Right ventricle myocardium superior (tissue), 1 donor: ENCODE measurements at regions of chr20 and their contacts with region 1.

Region 1: GRCh38 chr20:38229376-38230252 is 30.9 kb downstream of the KIAA1755 start:
- DNase-seq: no peak
- ATAC-seq: no peak

Region 2: DNA sequence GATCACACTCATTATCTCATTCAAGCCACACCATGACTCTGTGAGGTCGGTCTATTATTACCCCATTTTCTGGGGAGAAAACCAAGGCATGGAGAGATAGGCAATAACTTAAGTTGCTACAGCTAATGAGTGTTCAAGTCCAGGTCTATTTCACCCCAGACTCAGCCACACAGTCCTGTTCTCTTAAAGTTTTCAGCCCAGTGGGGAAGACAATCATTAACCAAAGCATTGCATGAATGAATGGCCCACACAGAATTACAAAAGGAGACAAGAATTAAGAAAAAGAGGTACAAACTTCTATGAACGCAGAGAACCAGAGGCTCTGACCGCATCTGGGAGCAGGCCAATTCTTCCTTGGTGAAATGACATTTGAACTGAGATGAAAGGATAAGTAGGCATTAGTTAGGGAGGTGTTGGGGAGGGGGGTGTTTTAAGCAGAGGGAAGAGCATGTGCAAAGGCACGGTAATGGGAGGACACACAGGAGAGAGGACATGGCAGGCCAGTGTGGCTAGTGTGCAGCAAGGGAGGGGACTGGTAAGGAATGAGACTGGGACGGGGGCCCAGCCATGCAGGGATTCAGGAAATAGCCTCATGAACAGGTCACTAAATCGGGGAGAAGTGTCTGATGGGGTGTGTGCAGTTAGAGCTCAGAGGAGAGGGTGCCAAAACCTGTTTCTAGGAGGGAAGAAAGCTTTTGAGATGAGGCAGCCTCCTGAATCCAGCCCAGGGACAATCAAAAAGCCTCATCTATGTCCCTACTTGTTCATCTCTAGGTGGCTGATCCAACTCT is 81.7 kb after region 1 on chr20:
- intact Hi-C with region 1: loop called (anchors 5 kb)
- DNase-seq: no peak
- ATAC-seq: no peak

Region 3: DNA sequence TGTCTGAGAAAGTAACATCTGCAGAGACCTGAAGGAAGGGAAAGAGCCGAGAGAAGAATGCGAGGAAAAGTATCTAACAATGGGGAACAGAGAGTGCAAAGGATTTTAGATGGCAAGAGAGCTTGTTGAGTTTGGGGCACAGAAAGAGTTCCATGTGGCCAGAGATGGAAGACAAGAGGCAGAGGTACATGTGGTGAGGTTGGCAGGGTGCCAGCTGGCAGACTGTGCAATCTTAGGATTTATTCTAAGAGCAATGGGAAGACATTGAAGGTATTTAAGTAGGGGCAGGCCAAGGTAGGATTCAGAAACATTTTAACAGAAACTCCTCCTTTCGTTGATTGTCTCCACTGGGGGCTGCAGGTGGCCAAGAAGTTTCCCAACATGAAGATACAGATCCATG is 96.3 kb after region 1 on chr20:
- intact Hi-C with region 1: loop called (anchors 5 kb)
- DNase-seq: no peak
- ATAC-seq: no peak

Region 4: GRCh38 chr20:38406476-38406875 is 176.9 kb after region 1 on chr20:
- intact Hi-C with region 1: loop called (anchors 5 kb)
- DNase-seq: no peak
- ATAC-seq: no peak